ENCODE measurements at regions of chr17 and their contacts with region 1.

Region 1: GRCh38 chr17:82917691-82918345 is 78.0 kb upstream of the ZNF750 start:
- DNase-seq: no peak
- ATAC-seq: no peak
- H3K4me3 ChIP-seq: no peak overlapping the region
- H3K27ac ChIP-seq: no peak overlapping the region
- H3K4me1 ChIP-seq: peaks cover 6 to 11% of the 10 kb centered on the region in 2 donors
- H3K27me3 ChIP-seq: no peaks in the 10 kb centered on the region
- CTCF ChIP-seq: peak; percentile 19 to 48 (median 31)
- POLR2A ChIP-seq: no peak

Region 2: DNA sequence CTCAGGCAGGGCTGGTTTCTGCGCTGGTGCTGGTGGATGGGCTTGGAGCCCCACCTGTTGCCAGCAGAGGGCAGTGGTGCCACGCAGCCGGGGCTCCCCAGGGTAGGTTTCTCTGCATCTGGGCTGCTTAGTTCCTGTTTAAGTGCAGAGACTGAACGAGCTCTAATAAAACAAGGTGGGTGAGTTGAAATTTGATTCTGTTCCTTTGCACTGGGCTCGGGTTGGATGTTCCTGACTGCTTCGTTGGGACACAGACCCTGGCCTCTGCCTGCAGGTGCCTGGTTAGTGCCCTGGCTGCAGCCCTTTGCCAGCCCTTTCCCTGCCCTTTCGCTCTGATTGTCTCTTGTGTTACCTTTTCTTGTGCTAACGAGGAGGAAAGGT is 135.9 kb before region 1 on chr17:
- in situ Hi-C with region 1: loop called (anchors 5 to 10 kb)
- intact Hi-C with region 1: loop called (anchors 1 kb)
- DNase-seq: peak; percentile 61 to 86
- ATAC-seq: peak; percentile 94 to 97
- H3K4me3 ChIP-seq: peak overlapping the region in 2 of 4 donors; percentile 7 to 20
- H3K27ac ChIP-seq: peak overlapping the region; percentile 81 to 87 (median 84)
- H3K4me1 ChIP-seq: peaks cover 16 to 19% of the 10 kb centered on the region in 2 donors
- H3K27me3 ChIP-seq: no peaks in the 10 kb centered on the region
- CTCF ChIP-seq: peak; percentile 94 to 99 (median 98)
- POLR2A ChIP-seq: peak in 1 of 2 donors; percentile 41

Region 3: DNA sequence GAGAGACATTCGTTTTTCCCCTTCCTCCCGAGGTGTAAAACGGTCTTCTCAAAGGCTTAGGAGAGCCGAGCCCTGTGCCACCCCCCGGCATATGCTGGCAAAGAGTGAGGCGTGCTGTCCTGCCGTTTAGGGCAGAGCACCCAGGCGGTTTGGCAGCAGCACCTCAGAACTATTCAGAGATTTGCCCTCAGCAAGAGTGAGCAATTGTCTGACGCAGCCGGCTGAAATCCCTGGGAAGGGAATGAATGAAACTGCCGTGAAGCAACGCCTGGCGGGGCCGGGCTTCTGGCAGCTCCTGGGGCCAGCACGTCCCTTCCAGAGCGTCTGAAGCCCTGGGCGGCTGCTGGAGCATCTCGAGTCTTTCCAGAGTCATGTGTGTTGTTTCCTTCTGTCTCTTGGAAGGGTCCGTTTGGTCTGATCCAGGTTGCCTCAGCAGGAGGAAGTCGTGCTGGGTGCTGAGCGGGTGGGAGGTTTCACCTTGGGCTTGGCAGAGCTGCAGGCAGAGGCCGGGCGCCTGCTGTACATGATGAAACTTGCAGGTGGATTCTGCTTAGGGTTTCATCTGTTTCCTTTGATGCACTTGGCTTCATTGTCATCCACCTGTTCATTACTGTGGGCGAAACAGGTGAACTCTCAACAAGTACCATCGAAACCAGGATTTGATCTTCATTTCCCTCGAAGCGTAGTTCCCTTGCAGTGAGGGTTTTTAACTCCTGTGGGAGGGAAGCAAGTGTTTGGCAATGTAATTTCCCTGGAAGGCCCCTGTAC is 130.6 kb before region 1 on chr17:
- in situ Hi-C with region 1: loop called (anchors 5 to 10 kb)
- intact Hi-C with region 1: loop called (anchors 1 kb)
- DNase-seq: peak; percentile 92 to 97
- ATAC-seq: peak; percentile 89 to 90
- H3K4me3 ChIP-seq: no peak overlapping the region
- H3K27ac ChIP-seq: peak overlapping the region; percentile 82 to 90 (median 85)
- H3K4me1 ChIP-seq: peaks cover 28 to 32% of the 10 kb centered on the region in 2 donors
- H3K27me3 ChIP-seq: no peaks in the 10 kb centered on the region
- CTCF ChIP-seq: no peak
- POLR2A ChIP-seq: peak; percentile 71

Region 4: GRCh38 chr17:82804442-82805191 is 113.2 kb before region 1 on chr17:
- in situ Hi-C with region 1: no loop called
- intact Hi-C with region 1: loop called (anchors 5 kb)
- DNase-seq: peak; percentile 92 to 98
- ATAC-seq: peak; percentile 97 to 98
- H3K4me3 ChIP-seq: peak overlapping the region in 2 of 4 donors; percentile 3 to 14
- H3K27ac ChIP-seq: peak overlapping the region; percentile 83 to 92 (median 88)
- H3K4me1 ChIP-seq: peaks cover 16 to 22% of the 10 kb centered on the region in 2 donors
- H3K27me3 ChIP-seq: no peaks in the 10 kb centered on the region
- CTCF ChIP-seq: peak in 1 of 5 experiments; percentile 13
- POLR2A ChIP-seq: peak in 1 of 2 donors; percentile 24

Region 5: GRCh38 chr17:82836823-82837357 is 80.9 kb before region 1 on chr17:
- in situ Hi-C with region 1: no loop called
- intact Hi-C with region 1: loop called (anchors 1 kb)
- DNase-seq: peak; percentile 32 to 66
- ATAC-seq: peak; percentile 61 to 68
- H3K4me3 ChIP-seq: no peak overlapping the region
- H3K27ac ChIP-seq: peak overlapping the region; percentile 64 to 88 (median 84)
- H3K4me1 ChIP-seq: peaks cover 22 to 33% of the 10 kb centered on the region in 2 donors
- H3K27me3 ChIP-seq: no peaks in the 10 kb centered on the region
- CTCF ChIP-seq: peak in 4 of 5 experiments; percentile 15 to 37 (median 32)
- POLR2A ChIP-seq: peak in 1 of 2 donors; percentile 53

Region 6: DNA sequence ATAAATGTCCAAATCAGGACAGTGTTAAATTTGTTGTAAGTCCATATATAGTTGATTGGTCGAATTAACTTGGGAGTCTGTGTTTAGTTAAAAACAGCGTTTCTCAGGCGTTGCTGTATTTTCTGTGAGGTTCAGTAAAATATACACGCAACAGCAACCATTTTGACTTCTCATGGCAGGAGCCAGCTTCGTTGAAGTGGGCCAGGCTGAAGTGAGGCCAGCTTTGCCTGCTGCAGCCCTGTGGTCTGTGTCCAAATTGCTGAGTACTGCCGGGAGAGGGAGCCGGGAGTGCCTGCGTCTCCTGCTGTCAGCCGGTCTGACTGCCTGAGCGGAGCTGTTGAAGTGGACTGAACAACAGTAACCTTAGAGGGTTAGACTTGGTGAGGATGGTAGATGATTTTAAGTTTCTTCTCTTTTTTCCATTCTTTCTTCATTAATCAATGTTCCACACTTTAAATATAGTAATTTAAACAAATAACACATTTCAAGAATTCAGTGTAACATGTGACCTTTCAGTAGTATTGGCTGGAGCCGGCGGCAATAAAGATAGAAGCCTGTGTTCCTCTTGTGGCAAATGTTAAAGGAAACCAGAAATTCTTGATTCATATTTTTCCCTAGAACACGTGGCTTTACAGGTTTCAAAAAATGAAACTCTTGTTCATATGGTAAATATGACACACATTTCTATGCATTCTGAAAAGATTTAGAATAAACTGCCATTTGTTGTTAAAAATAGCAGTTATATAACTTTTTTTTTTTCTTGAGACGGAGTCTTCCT is 41.0 kb before region 1 on chr17:
- in situ Hi-C with region 1: no loop called
- intact Hi-C with region 1: loop called (anchors 1 kb)
- DNase-seq: peak; percentile 86 to 93
- ATAC-seq: peak; percentile 91
- H3K4me3 ChIP-seq: peak overlapping the region in 3 of 4 donors; percentile 12 to 33 (median 22)
- H3K27ac ChIP-seq: peak overlapping the region; percentile 77 to 89 (median 82)
- H3K4me1 ChIP-seq: peaks cover 19 to 42% of the 10 kb centered on the region in 2 donors
- H3K27me3 ChIP-seq: no peaks in the 10 kb centered on the region
- CTCF ChIP-seq: peak; percentile 21 to 61 (median 52)
- POLR2A ChIP-seq: peak; percentile 25 to 38

Region 7: GRCh38 chr17:83051395-83052233 is 133.8 kb after region 1 on chr17:
- in situ Hi-C with region 1: no loop called
- intact Hi-C with region 1: loop called (anchors 10 kb)
- DNase-seq: peak; percentile 93 to 97
- ATAC-seq: peak; percentile 90
- H3K4me3 ChIP-seq: peak overlapping the region; percentile 64 to 81 (median 76)
- H3K27ac ChIP-seq: peak overlapping the region; percentile 89 to 91 (median 89)
- H3K4me1 ChIP-seq: peaks cover 17 to 21% of the 10 kb centered on the region in 2 donors
- H3K27me3 ChIP-seq: no peaks in the 10 kb centered on the region
- CTCF ChIP-seq: no peak
- POLR2A ChIP-seq: peak; percentile 84 to 88